Dorsolateral prefrontal cortex (tissue), 120 donors: ENCODE measurements at regions of chr1 and their contacts with region 1.

Region 1: DNA sequence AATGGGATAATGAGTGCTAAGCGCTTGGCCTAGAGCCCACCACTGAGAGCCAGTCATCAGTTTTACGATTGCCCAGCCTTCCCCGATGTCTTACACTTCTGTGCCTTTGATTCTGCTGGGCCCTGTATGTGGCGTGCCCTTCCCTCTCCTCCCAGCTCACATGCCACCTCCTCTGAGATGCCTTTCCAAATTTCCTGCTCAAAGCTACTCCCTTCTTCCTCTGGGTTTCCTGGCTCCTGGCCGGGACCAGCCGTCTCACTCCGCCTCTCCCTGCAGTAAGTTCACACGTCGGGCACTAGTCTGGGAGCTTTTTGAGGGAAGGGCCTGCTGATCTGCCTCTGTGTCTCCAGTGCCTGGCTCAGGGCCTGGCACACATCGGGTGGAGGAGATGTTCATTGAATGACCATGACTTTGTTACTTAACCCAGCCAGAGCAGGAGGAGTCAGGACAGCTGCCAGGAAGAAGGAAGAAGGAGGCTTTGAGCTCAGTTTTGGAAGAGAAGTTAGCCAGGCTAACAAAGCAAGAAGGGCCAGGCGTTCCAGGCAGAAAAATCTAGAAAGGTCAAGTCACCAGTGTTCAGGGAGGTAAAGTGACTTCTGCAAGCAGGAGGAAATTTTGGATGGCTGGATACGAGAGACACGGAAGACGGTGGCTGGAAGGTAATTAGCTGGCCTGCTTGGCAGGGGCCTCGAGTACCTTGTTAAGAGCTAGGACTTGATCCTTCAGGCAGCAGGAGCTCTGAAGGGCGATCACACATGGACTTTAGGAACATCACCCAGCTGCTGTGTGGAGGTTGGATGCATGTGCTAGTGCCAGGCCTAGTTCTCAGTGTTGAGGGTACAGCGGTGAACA is 63.6 kb downstream of the EPHB2 start:
- DNase-seq: peak in 5 of 10 donors; percentile 34 to 61 (median 44)
- H3K4me3 ChIP-seq: no peak overlapping the region
- H3K27ac ChIP-seq: peak overlapping the region in 10 of 59 donors; percentile 8 to 46 (median 20)
- H3K27me3 ChIP-seq: no peaks in the 10 kb centered on the region
- CTCF ChIP-seq: no peak

Region 2: GRCh38 chr1:22673486-22674409 is 100.5 kb before region 1 on chr1:
- intact Hi-C with region 1: no loop called
- DNase-seq: peak; percentile 23 to 82 (median 64)
- H3K4me3 ChIP-seq: no peak overlapping the region
- H3K27ac ChIP-seq: no peak overlapping the region
- H3K27me3 ChIP-seq: peaks cover 0 to 19% (median 0%) of the 10 kb centered on the region in 45 donors
- CTCF ChIP-seq: peak; percentile 58 to 93 (median 79)

Region 3: DNA sequence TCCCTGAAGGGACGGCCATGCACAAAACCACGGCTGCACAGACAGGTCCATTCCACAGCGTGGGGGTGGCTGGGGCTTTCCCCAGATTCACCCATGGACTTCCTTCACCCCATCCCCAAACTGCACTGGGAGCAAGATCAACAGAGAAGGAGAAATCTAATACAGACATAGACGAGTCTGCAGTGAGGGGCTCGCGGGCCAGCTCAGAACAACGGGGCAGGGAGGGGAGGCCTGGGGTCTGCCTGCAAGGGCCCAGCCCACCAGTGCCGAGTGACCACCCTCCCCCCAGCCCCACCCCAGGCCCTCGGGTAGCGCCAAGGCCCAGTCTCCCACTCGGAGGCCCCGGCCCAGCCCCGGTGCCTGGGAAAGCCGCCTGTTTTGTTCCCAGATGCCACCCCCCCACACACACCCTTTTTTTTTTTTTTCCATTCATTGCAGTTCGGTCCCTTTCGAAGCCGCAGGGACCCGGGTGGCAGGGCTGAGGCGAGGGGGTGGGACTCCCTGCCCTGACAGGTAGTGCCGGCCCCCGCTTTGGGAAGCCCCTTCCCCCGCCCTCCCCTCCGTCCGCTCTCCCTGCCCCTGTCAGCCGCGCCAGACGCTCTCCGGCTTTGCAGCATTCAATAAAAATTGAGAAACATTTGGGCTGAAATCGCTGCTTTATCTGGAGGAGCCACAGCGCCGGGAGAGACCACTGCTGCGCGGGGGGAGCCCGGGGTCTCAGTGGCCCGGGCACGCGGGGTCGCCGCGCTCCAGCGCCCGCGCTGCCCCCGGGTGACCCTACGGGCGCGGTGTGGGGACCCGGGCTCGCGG is 64.1 kb before region 1 on chr1:
- intact Hi-C with region 1: loop called in 1 of 2 experiments (anchors 5 kb)
- DNase-seq: peak in 9 of 10 donors; percentile 44 to 73 (median 57)
- H3K4me3 ChIP-seq: peak overlapping the region; percentile 40 to 77 (median 60)
- H3K27ac ChIP-seq: peak overlapping the region in 55 of 59 donors; percentile 45 to 90 (median 77)
- H3K27me3 ChIP-seq: no peaks in the 10 kb centered on the region
- CTCF ChIP-seq: no peak

Region 4: GRCh38 chr1:22808676-22809483 is 34.7 kb after region 1 on chr1:
- intact Hi-C with region 1: loop called in 1 of 2 experiments (anchors 5 kb)
- DNase-seq: peak; percentile 14 to 85 (median 71)
- H3K4me3 ChIP-seq: no peak overlapping the region
- H3K27ac ChIP-seq: peak overlapping the region in 58 of 59 donors; percentile 61 to 98 (median 92)
- H3K27me3 ChIP-seq: no peaks in the 10 kb centered on the region
- CTCF ChIP-seq: peak in 1 of 56 donors; percentile 12

Region 5: GRCh38 chr1:22870201-22870871 is 96.1 kb after region 1 on chr1:
- intact Hi-C with region 1: no loop called
- DNase-seq: peak in 1 of 10 donors; percentile 28
- H3K4me3 ChIP-seq: no peak overlapping the region
- H3K27ac ChIP-seq: no peak overlapping the region
- H3K27me3 ChIP-seq: no peaks in the 10 kb centered on the region
- CTCF ChIP-seq: no peak